ENCODE measurements at regions of chr13 and their contacts with region 1.

Region 1: GRCh38 chr13:23921451-23921888 is 24.2 kb upstream of the C1QTNF9B start:
- DNase-seq: peak in 1 of 9 donors; percentile 20
- ATAC-seq: peak; percentile 34
- H3K4me3 ChIP-seq: no peak overlapping the region
- H3K4me3 Mint-ChIP-seq: no peak overlapping the region
- H3K27ac ChIP-seq: no peak overlapping the region
- H3K27ac Mint-ChIP-seq: no peak overlapping the region
- H3K4me1 ChIP-seq: no peaks in the 10 kb centered on the region
- H3K4me1 Mint-ChIP-seq: no peaks in the 10 kb centered on the region
- H3K27me3 ChIP-seq: no peaks in the 10 kb centered on the region
- H3K27me3 Mint-ChIP-seq: peaks cover 37 to 69% (median 38%) of the 10 kb centered on the region in 5 donors

Region 2: GRCh38 chr13:23330356-23330755 is 591.1 kb before region 1 on chr13:
- CTCF ChIA-PET with region 1: no interaction called
- POLR2A ChIA-PET with region 1: no interaction called
- intact Hi-C with region 1: no loop called
- DNase-seq: no peak
- ATAC-seq: no peak
- H3K4me3 ChIP-seq: no peak overlapping the region
- H3K4me3 Mint-ChIP-seq: no peak overlapping the region
- H3K27ac ChIP-seq: no peak overlapping the region
- H3K27ac Mint-ChIP-seq: no peak overlapping the region
- H3K4me1 ChIP-seq: no peaks in the 10 kb centered on the region
- H3K4me1 Mint-ChIP-seq: peaks cover 0 to 2% (median 0%) of the 10 kb centered on the region in 7 donors
- H3K27me3 ChIP-seq: no peaks in the 10 kb centered on the region
- H3K27me3 Mint-ChIP-seq: no peaks in the 10 kb centered on the region

Region 3: GRCh38 chr13:23960566-23961156 is 39.2 kb after region 1 on chr13:
- CTCF ChIA-PET with region 1: interaction called, 3 read pairs
- POLR2A ChIA-PET with region 1: no interaction called
- intact Hi-C with region 1: loop called in 1 of 2 experiments (anchors 1 kb)
- DNase-seq: peak in 2 of 9 donors; percentile 7 to 8
- ATAC-seq: peak; percentile 41
- H3K4me3 ChIP-seq: no peak overlapping the region
- H3K4me3 Mint-ChIP-seq: no peak overlapping the region
- H3K27ac ChIP-seq: no peak overlapping the region
- H3K27ac Mint-ChIP-seq: no peak overlapping the region
- H3K4me1 ChIP-seq: no peaks in the 10 kb centered on the region
- H3K4me1 Mint-ChIP-seq: peaks cover 0 to 47% (median 0%) of the 10 kb centered on the region in 7 donors
- H3K27me3 ChIP-seq: no peaks in the 10 kb centered on the region
- H3K27me3 Mint-ChIP-seq: peaks cover 0 to 12% (median 0%) of the 10 kb centered on the region in 5 donors

Region 4: GRCh38 chr13:23966691-23967615 is 45.5 kb after region 1 on chr13:
- CTCF ChIA-PET with region 1: no interaction called
- POLR2A ChIA-PET with region 1: no interaction called
- intact Hi-C with region 1: loop called in 1 of 2 experiments (anchors 2 kb)
- DNase-seq: peak in 6 of 9 donors; percentile 19 to 58 (median 48)
- ATAC-seq: peak; percentile 79
- H3K4me3 ChIP-seq: peak overlapping the region; percentile 57
- H3K4me3 Mint-ChIP-seq: peak overlapping the region; percentile 65 to 88 (median 84)
- H3K27ac ChIP-seq: peak overlapping the region; percentile 52
- H3K27ac Mint-ChIP-seq: peak overlapping the region; percentile 18 to 93 (median 88)
- H3K4me1 ChIP-seq: peaks cover 6% of the 10 kb centered on the region in 2 donors
- H3K4me1 Mint-ChIP-seq: peaks cover 6 to 39% (median 18%) of the 10 kb centered on the region in 7 donors
- H3K27me3 ChIP-seq: no peaks in the 10 kb centered on the region
- H3K27me3 Mint-ChIP-seq: no peaks in the 10 kb centered on the region

Region 5: GRCh38 chr13:23980160-23980551 is 58.7 kb after region 1 on chr13:
- CTCF ChIA-PET with region 1: no interaction called
- POLR2A ChIA-PET with region 1: no interaction called
- intact Hi-C with region 1: loop called in 1 of 2 experiments (anchors 10 kb)
- DNase-seq: peak; percentile 70 to 92 (median 79)
- ATAC-seq: peak; percentile 91
- H3K4me3 ChIP-seq: peak overlapping the region; percentile 54
- H3K4me3 Mint-ChIP-seq: peak overlapping the region; percentile 87 to 99 (median 90)
- H3K27ac ChIP-seq: no peak overlapping the region
- H3K27ac Mint-ChIP-seq: peak overlapping the region in 7 of 9 donors; percentile 18 to 81 (median 71)
- H3K4me1 ChIP-seq: peaks cover 7 to 8% of the 10 kb centered on the region in 2 donors
- H3K4me1 Mint-ChIP-seq: peaks cover 6 to 18% (median 15%) of the 10 kb centered on the region in 7 donors
- H3K27me3 ChIP-seq: peaks cover 6 to 7% of the 10 kb centered on the region in 2 donors
- H3K27me3 Mint-ChIP-seq: peaks cover 21 to 63% (median 26%) of the 10 kb centered on the region in 5 donors

Region 6: GRCh38 chr13:24053519-24054251 is 132.2 kb after region 1 on chr13:
- CTCF ChIA-PET with region 1: no interaction called
- POLR2A ChIA-PET with region 1: no interaction called
- intact Hi-C with region 1: loop called in 1 of 2 experiments (anchors 1 kb)
- DNase-seq: peak; percentile 24 to 70 (median 61)
- ATAC-seq: peak; percentile 91
- H3K4me3 ChIP-seq: no peak overlapping the region
- H3K4me3 Mint-ChIP-seq: no peak overlapping the region
- H3K27ac ChIP-seq: no peak overlapping the region
- H3K27ac Mint-ChIP-seq: peak overlapping the region in 5 of 9 donors; percentile 21 to 68 (median 24)
- H3K4me1 ChIP-seq: no peaks in the 10 kb centered on the region
- H3K4me1 Mint-ChIP-seq: peaks cover 0 to 12% (median 9%) of the 10 kb centered on the region in 7 donors
- H3K27me3 ChIP-seq: no peaks in the 10 kb centered on the region
- H3K27me3 Mint-ChIP-seq: peaks cover 3 to 22% (median 7%) of the 10 kb centered on the region in 5 donors

Region 7: GRCh38 chr13:24220086-24220703 is 298.7 kb after region 1 on chr13:
- CTCF ChIA-PET with region 1: interaction called, 3 read pairs
- POLR2A ChIA-PET with region 1: no interaction called
- intact Hi-C with region 1: loop called (anchors 1 kb)
- DNase-seq: peak in 7 of 9 donors; percentile 59 to 77 (median 70)
- ATAC-seq: peak; percentile 88
- H3K4me3 ChIP-seq: no peak overlapping the region
- H3K4me3 Mint-ChIP-seq: no peak overlapping the region
- H3K27ac ChIP-seq: no peak overlapping the region
- H3K27ac Mint-ChIP-seq: peak overlapping the region in 2 of 9 donors; percentile 10 to 50
- H3K4me1 ChIP-seq: peaks cover 0 to 7% of the 10 kb centered on the region in 2 donors
- H3K4me1 Mint-ChIP-seq: peaks cover 7 to 44% (median 22%) of the 10 kb centered on the region in 7 donors
- H3K27me3 ChIP-seq: no peaks in the 10 kb centered on the region
- H3K27me3 Mint-ChIP-seq: no peaks in the 10 kb centered on the region

Region 8: GRCh38 chr13:24228852-24229458 is 307.5 kb after region 1 on chr13:
- CTCF ChIA-PET with region 1: no interaction called
- POLR2A ChIA-PET with region 1: no interaction called
- intact Hi-C with region 1: loop called in 1 of 2 experiments (anchors 2 kb)
- DNase-seq: peak in 6 of 9 donors; percentile 39 to 57 (median 46)
- ATAC-seq: peak; percentile 73
- H3K4me3 ChIP-seq: no peak overlapping the region
- H3K4me3 Mint-ChIP-seq: no peak overlapping the region
- H3K27ac ChIP-seq: no peak overlapping the region
- H3K27ac Mint-ChIP-seq: no peak overlapping the region
- H3K4me1 ChIP-seq: peaks cover 0 to 40% of the 10 kb centered on the region in 2 donors
- H3K4me1 Mint-ChIP-seq: peaks cover 9 to 46% (median 19%) of the 10 kb centered on the region in 7 donors
- H3K27me3 ChIP-seq: no peaks in the 10 kb centered on the region
- H3K27me3 Mint-ChIP-seq: no peaks in the 10 kb centered on the region